GM10248 (cell line): ENCODE measurements at regions of chr1 and their contacts with region 1.

Region 1: GRCh38 chr1:6026095-6026809 is 19.4 kb upstream of the KCNAB2 start:
- DNase-seq: peak; percentile 90
- CTCF ChIP-seq: no peak

Region 2: GRCh38 chr1:5915587-5916571 is 110.4 kb before region 1 on chr1:
- CTCF ChIA-PET with region 1: no interaction called
- POLR2A ChIA-PET with region 1: interaction called, 10 read pairs
- DNase-seq: peak; percentile 74
- CTCF ChIP-seq: peak; percentile 60

Region 3: GRCh38 chr1:5992026-5992813 is 34.0 kb before region 1 on chr1 and contains the start of gene NPHP4:
- CTCF ChIA-PET with region 1: interaction called, 10 read pairs
- POLR2A ChIA-PET with region 1: interaction called, 15 read pairs
- DNase-seq: peak; percentile 99
- CTCF ChIP-seq: no peak